Lower leg skin (tissue), 4 donors: ENCODE measurements at regions of chrX and their contacts with region 1.

Region 1: GRCh38 chrX:80705379-80705778 is 104.3 kb downstream of the BRWD3 start:
- DNase-seq: no peak
- H3K4me3 ChIP-seq: no peak overlapping the region
- CTCF ChIP-seq: no peak
- POLR2A ChIP-seq: no peak

Region 2: GRCh38 chrX:81729269-81729777 is 1023.9 kb after region 1 on chrX:
- intact Hi-C with region 1: loop called (anchors 5 kb)
- DNase-seq: no peak
- H3K4me3 ChIP-seq: no peak overlapping the region
- CTCF ChIP-seq: no peak
- POLR2A ChIP-seq: no peak

Region 3: DNA sequence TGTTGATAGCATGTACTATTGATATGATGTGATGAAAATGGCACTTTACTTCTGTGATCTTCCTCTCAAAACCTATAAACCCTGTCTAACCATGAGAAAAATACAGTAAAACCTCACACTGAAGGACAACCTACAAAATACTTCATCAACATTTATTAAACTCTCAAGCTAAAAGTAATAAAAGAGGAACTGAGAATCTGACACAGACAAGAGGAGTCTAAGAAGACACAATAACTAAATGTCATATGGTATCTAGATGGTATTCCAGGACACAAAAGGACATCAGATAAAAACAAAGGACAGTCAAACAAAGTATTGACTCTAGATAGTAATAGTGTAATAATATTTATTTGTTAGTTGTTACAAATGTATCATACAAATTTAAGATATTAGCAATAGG is 1151.8 kb after region 1 on chrX:
- intact Hi-C with region 1: no loop called
- DNase-seq: no peak
- H3K4me3 ChIP-seq: no peak overlapping the region
- CTCF ChIP-seq: no peak
- POLR2A ChIP-seq: no peak